WTC11 (cell line): ENCODE measurements at regions of chrX and their contacts with region 1.

Region 1: DNA sequence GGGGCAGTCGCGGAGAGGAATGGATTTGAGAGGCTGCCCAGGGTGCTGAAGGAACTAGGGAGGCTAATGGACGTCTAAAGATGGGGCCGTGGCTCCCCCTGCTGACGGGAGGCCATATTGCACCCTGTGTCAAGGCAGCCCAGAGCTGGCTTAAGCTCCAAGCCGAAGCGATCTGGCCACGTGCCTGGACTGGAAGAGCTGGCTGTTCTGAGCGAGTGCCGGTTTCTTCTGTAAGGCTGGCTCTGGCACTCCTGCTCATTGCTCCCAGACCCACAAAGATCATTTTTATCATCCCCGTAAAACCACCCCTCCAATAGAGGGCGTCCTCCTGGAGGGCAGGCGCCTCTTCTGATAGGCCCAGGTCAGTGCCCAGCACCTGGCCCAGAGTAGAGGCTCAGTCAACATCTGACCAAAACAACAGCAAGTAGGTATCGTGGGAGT is 5.6 kb downstream of the PNCK start:
- DNase-seq: peak; percentile 84
- ATAC-seq: peak; percentile 78
- H3K4me3 Mint-ChIP-seq: peak overlapping the region; percentile 54
- H3K27ac Mint-ChIP-seq: no peak overlapping the region; the same call in 1 of the 2 replicates
- H3K4me1 Mint-ChIP-seq: peaks cover 3% of the 10 kb centered on the region; the same call in 1 of the 2 replicates
- H3K27me3 Mint-ChIP-seq: peaks cover 28% of the 10 kb centered on the region
- CTCF ChIP-seq: peak; percentile 71

Region 2: GRCh38 chrX:152480269-152481212 is 1187.4 kb before region 1 on chrX:
- CTCF ChIA-PET with region 1: no interaction called
- POLR2A ChIA-PET with region 1: no interaction called
- DNase-seq: peak; percentile 16
- ATAC-seq: no peak
- H3K4me3 Mint-ChIP-seq: no peak overlapping the region
- H3K27ac Mint-ChIP-seq: no peak overlapping the region
- H3K4me1 Mint-ChIP-seq: no peaks in the 10 kb centered on the region
- H3K27me3 Mint-ChIP-seq: no peaks in the 10 kb centered on the region; the same call in 1 of the 2 replicates
- CTCF ChIP-seq: no peak

Region 3: DNA sequence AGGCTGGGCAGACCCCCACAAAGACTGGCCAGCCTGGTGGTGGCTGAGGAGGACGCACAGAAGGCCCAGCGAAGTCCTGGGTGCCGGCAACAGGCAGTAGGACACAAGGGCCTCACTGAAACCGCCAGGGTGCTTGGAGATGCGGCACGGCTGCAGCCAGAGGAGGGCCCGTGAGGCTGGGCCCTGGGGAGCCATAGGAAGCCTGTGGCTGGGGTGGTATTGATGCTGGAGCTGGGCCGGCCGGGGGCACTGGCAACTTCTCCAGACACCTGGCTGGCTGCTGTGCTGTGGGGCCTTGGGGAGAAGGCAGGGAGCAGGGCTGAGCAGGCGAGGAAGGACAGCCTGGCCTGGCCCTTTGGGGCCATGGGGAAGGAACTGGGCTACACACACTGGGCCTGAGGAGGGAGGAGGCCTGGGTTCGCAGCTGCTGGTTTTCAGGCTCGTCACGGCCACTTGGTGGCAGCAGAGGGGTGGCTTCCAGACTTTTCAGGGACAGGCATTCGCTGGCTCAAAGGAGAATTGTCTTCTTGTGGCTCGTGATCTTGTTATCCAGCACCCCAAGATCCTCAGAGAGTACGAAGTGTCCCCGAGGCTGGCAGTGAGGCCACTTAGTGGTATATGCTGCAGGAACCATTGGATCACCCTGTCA is 113.3 kb before region 1 on chrX:
- CTCF ChIA-PET with region 1: interaction called, 35 read pairs
- POLR2A ChIA-PET with region 1: no interaction called
- DNase-seq: peak; percentile 74
- ATAC-seq: peak; percentile 84
- H3K4me3 Mint-ChIP-seq: no peak overlapping the region
- H3K27ac Mint-ChIP-seq: no peak overlapping the region
- H3K4me1 Mint-ChIP-seq: no peaks in the 10 kb centered on the region
- H3K27me3 Mint-ChIP-seq: no peaks in the 10 kb centered on the region
- CTCF ChIP-seq: peak; percentile 38

Region 4: GRCh38 chrX:153571534-153571908 is 96.5 kb before region 1 on chrX:
- CTCF ChIA-PET with region 1: interaction called, 22 read pairs
- POLR2A ChIA-PET with region 1: no interaction called
- DNase-seq: no peak
- ATAC-seq: no peak
- H3K4me3 Mint-ChIP-seq: no peak overlapping the region
- H3K27ac Mint-ChIP-seq: no peak overlapping the region
- H3K4me1 Mint-ChIP-seq: 0 out of 2 replicates have a peak, but pooled peaks cover 5% of the 10 kb centered on the region
- H3K27me3 Mint-ChIP-seq: no peaks in the 10 kb centered on the region
- CTCF ChIP-seq: no peak

Region 5: GRCh38 chrX:153599192-153600031 is 68.6 kb before region 1 on chrX:
- CTCF ChIA-PET with region 1: interaction called, 14 read pairs
- POLR2A ChIA-PET with region 1: no interaction called
- DNase-seq: peak; percentile 77
- ATAC-seq: peak; percentile 92
- H3K4me3 Mint-ChIP-seq: peak overlapping the region; percentile 69
- H3K27ac Mint-ChIP-seq: no peak overlapping the region
- H3K4me1 Mint-ChIP-seq: peaks cover 13% of the 10 kb centered on the region
- H3K27me3 Mint-ChIP-seq: peaks cover 4% of the 10 kb centered on the region
- CTCF ChIP-seq: no peak

Region 6: DNA sequence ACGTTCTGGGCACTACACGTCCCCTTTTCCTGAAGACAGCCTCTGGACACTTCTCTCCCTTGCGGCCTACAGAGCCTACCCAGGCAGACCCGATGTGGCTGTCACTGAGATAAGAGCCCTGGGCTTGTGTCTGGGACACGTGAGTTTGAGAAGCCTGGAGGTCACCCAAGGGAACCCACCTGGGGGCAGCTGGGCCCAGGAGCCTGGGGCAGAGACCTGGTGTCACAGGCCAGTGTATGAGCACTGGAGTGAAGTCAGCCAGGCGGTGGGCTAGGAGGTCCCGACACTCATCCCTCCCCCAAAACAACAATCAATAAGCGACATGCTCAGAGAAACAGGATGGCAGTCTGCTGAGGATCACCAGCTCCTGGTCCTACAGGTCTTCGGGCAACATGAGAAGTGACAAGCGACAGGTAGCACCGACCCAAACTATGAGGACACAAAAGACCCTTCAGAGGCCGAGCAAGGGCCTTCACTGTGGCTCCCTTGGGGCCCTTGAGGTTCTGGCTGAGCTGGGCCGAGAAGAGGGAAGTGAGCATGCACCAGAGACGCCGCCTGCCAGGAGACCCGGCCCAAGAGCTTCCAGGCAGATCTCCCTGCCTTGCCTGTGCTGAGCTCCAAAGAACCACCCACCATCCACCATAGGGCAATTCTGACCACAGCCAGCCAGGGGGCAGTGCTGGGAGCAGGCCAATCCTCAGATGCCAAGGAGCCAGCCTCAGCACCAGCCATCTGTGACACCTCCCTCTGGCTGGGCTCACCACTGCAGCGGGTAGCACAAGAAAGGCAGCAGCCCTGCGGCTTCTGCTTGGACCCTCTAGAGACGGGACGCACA is 32.0 kb before region 1 on chrX:
- CTCF ChIA-PET with region 1: interaction called, 66 read pairs
- POLR2A ChIA-PET with region 1: no interaction called
- DNase-seq: peak; percentile 70
- ATAC-seq: peak; percentile 97
- H3K4me3 Mint-ChIP-seq: no peak overlapping the region
- H3K27ac Mint-ChIP-seq: no peak overlapping the region
- H3K4me1 Mint-ChIP-seq: no peaks in the 10 kb centered on the region
- H3K27me3 Mint-ChIP-seq: peaks cover 6% of the 10 kb centered on the region
- CTCF ChIP-seq: no peak

Region 7: DNA sequence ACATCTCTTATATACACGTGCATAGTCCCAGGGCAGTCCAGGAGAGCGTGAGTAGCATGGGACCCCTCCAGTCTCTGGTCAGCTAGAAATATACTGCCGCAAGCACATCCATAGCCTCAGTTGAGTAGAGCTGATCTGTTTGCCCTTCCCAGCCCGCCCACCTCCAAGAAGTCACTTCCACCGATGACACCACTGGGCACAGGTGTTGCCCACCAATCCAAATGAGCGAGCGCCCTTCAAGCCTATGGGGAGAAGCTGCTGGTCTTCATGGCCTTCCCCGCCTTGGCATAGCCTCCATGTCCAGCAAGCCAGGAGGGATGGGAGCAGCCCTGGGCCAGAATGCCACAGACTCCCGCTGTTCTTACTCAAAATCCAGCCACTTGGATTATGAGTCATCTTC is 10.8 kb before region 1 on chrX:
- CTCF ChIA-PET with region 1: interaction called, 153 read pairs
- POLR2A ChIA-PET with region 1: no interaction called
- DNase-seq: no peak
- ATAC-seq: no peak
- H3K4me3 Mint-ChIP-seq: no peak overlapping the region
- H3K27ac Mint-ChIP-seq: no peak overlapping the region
- H3K4me1 Mint-ChIP-seq: no peaks in the 10 kb centered on the region
- H3K27me3 Mint-ChIP-seq: peaks cover 24% of the 10 kb centered on the region
- CTCF ChIP-seq: no peak

Region 8: DNA sequence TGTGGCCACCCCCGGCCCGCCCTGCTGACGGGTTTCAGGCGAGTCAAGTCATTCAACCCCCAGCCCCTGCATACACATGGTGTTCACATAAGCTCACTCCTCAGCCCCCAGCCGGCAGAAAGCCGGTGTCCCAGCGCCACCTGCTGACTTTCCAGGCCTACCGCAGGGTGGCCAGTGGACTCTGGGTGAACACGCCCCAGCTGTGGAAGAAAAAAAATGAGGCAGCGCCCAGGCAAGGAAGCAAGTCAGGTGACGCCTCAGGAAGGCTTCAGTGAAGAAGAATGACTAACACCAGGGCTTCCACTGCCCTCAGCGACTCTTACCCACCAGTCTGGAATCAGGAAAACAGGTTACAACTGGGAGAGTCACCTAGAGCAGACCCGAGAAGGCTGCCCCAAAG is 40.4 kb after region 1 on chrX:
- CTCF ChIA-PET with region 1: interaction called, 28 read pairs
- POLR2A ChIA-PET with region 1: no interaction called
- DNase-seq: peak; percentile 73
- ATAC-seq: peak; percentile 84
- H3K4me3 Mint-ChIP-seq: no peak overlapping the region
- H3K27ac Mint-ChIP-seq: no peak overlapping the region
- H3K4me1 Mint-ChIP-seq: 0 out of 2 replicates have a peak, but pooled peaks cover 3% of the 10 kb centered on the region
- H3K27me3 Mint-ChIP-seq: no peaks in the 10 kb centered on the region
- CTCF ChIP-seq: no peak